ENCODE measurements at regions of chr2 and their contacts with region 1.

Region 1: GRCh38 chr2:15939854-15940660 is at the start of gene MYCN:
- DNase-seq: peak; percentile 57 to 95 (median 80)

Region 2: DNA sequence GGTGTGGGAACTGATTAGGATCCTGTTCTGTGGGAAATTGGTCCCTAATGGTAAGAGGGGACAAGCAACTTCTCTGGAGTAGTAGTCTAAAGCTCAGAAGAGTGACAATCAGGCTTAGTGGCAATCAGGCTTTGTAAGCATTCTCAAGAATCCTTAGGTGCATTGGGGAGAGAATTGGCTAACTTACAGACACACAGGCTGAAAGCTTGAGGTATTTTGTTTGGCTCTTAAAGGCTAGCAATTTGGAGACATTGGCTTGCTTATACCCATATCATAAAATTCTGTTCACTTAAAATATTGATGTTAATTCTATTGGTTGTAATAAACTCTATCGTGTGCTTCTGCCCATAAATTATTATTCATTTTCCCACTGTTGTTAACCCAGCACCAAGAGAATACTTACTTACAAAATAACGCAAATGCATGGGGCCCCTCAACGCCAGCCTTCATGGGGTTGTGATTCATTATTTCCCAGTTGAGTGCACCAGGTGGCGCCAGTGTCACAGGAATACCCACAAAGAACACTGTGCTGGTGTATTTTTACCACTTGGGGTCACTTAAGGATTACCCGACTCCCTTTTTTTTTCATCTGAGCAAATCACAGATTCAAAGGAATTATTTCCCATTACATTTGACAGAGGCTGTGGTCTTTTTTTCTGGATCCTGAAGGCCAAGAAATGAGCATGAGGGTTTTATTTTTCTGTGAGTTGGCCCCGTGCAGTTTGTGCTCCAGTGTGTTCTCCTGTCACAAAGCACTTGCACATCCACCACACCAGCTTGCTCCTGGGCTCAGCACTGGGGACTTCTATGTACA is 302.9 kb before region 1 on chr2:
- intact Hi-C with region 1: loop called (anchors 2 kb)
- DNase-seq: peak; percentile 45 to 95 (median 81)

Region 3: DNA sequence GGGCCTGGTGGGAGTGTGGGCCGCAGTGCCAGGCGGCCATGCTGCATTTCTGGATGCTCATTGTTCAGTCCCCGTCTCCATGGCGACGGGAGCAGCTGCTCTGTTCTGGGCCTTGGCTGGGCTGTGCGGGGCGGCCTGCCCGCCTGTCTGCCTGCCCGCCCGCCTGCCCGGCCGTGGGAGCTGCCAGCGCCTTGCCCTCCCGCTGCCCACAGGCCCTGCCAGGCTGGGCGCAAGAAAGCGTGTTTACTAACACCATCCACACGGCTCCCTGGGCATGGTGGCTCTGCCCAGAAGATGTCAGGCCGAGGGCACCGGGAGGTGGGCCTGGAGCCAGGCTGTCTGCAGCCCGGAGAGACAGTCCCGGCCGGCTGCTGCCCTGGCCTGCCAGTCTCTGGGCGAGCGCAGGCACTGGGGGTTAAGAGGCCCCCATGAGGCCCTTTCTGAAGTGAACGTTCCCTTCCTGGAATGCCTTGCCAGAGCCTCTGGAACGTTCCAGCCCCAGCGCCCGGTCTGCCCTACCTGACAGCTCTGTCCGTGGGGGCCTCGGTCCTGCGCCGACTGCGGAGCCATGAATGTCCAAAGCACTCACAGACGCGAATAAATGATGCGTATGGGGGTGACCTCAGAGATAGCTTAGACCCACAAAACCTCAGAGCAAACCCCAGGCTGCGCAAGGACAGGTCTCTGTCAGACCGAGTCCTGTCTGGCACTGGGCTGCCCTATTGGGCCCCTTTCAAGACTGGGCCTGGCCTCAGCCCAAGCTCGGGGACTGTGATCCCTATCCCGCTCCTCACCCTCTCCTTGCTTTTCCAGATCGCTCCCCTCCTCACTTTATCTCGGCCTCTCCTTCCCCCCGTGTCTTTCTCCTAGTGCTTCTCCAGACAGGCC is 44.6 kb after region 1 on chr2:
- intact Hi-C with region 1: loop called (anchors 1 kb)
- DNase-seq: peak; percentile 84 to 99 (median 92)

Region 4: DNA sequence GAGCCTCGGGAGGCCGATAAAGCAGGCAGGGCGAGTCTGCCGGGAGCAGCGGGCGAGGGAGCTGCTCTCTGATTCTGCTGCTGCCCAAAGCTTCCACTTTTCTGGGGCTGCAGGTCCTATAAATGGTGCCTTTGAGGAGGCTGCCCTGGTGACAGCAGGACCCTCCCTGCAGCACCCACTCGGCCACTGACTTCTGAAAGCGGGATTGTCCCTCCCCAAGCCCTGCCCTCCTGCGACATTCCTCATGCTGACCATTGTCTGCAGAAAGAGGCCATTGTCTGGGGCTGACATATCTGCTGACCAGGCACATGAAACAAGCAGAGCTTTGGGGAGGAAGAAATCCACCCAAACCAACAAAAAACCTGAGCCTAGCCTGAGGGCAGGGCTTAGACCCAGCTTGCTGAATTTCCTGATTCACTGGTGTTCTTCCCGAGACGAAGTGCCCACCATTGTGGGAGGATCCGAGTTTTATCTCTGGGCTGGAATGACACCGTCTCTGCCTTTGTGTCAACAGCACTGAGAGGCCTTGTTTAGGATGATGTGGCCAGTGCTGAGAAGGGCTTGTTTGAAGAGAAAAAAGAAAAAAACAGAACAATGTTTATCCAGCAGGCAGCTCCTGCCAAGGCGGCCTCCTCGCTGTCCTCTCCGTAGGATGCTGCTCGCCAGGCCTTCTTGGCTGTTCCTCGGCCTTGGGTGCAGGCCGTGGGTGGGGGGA is 130.0 kb after region 1 on chr2:
- intact Hi-C with region 1: loop called (anchors 1 kb)
- DNase-seq: peak; percentile 75 to 98 (median 86)

Region 5: GRCh38 chr2:16281451-16282336 is 341.6 kb after region 1 on chr2:
- intact Hi-C with region 1: loop called (anchors 1 kb)
- DNase-seq: peak in 7 of 10 donors; percentile 19 to 87 (median 38)

Region 6: GRCh38 chr2:16487686-16488085 is 547.6 kb after region 1 on chr2:
- intact Hi-C with region 1: loop called (anchors 5 kb)
- DNase-seq: peak in 2 of 10 donors; percentile 20 to 77

Measured in posterior cingulate gyrus (tissue), 11 donors.